Breast epithelium (tissue), 4 donors: ENCODE measurements at regions of chr14 and their contacts with region 1.

Region 1: GRCh38 chr14:94373708-94374107 is 14.7 kb downstream of the SERPINA1 start:
- DNase-seq: peak in 1 of 2 donors; percentile 71
- H3K4me3 ChIP-seq: no peak overlapping the region
- H3K27ac ChIP-seq: peak overlapping the region in 1 of 2 donors; percentile 55
- H3K4me1 ChIP-seq: no peaks in the 10 kb centered on the region
- H3K27me3 ChIP-seq: no peaks in the 10 kb centered on the region
- CTCF ChIP-seq: no peak
- POLR2A ChIP-seq: no peak

Region 2: DNA sequence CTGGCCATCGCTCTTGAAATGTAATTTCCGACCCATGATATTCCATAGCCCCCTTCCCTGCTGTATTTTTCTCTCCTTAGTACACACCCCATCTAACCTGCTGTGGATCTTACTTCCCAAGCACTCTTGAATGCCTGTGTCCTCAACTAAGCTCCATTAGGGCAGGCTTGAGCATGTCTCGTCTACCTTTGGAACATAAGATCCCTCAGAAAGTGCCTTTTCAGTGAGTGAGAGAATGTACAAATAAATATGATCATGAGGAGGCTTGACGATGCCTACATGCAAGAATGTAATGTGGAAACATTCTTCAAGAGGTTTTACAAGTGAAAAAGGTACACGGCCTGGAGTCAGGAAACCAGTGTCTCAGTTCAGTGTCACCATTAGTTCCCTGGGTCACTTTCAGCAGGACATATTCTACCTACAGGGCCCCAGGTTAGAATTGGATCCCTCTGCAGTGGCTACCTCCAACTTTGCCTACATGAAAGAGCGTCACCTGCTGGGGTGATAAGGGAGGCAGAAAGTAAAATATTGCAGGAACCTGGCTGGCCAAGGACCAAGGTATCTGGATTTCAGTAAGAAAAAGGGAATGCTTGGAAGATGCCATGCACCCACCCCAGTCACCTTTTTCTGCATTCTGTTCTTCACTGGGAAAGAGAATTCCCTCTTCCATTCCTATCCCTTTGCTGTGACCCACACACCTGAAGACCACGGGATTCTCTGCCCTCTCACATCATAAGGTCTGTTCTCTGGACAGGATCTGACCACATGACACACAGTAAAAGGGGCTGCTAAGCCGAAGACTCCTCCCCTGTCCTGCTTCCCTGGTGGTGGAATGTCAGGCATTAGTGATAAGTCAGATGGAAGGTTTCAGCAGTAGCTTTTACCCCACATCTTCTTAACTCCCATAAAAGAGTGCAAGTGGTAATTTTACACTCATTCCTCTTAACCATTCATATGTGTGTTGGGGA is 39.2 kb after region 1 on chr14:
- intact Hi-C with region 1: loop called (anchors 1 kb)
- DNase-seq: no peak
- H3K4me3 ChIP-seq: no peak overlapping the region
- H3K27ac ChIP-seq: no peak overlapping the region
- H3K4me1 ChIP-seq: no peaks in the 10 kb centered on the region
- H3K27me3 ChIP-seq: no peaks in the 10 kb centered on the region
- CTCF ChIP-seq: no peak
- POLR2A ChIP-seq: no peak